CD4-positive, alpha-beta T cell (primary cell): ENCODE measurements at regions of chr2 and their contacts with region 1.

Region 1: GRCh38 chr2:196783431-196784094 is 15.9 kb downstream of the GTF3C3 start:
- DNase-seq: no peak
- ATAC-seq: no peak
- H3K4me3 ChIP-seq: no peak overlapping the region
- H3K4me3 Mint-ChIP-seq: no peak overlapping the region
- H3K27ac ChIP-seq: no peak overlapping the region
- H3K27ac Mint-ChIP-seq: no peak overlapping the region
- H3K4me1 ChIP-seq: no peaks in the 10 kb centered on the region
- H3K4me1 Mint-ChIP-seq: peaks cover 7% of the 10 kb centered on the region
- H3K27me3 ChIP-seq: no peaks in the 10 kb centered on the region
- H3K27me3 Mint-ChIP-seq: no peaks in the 10 kb centered on the region
- CTCF ChIP-seq: no peak

Region 2: GRCh38 chr2:196971574-196972279 is 188.2 kb after region 1 on chr2:
- CTCF ChIA-PET with region 1: no interaction called
- POLR2A ChIA-PET with region 1: no interaction called
- intact Hi-C with region 1: no loop called
- DNase-seq: no peak
- ATAC-seq: no peak
- H3K4me3 ChIP-seq: no peak overlapping the region
- H3K4me3 Mint-ChIP-seq: no peak overlapping the region
- H3K27ac ChIP-seq: no peak overlapping the region
- H3K27ac Mint-ChIP-seq: no peak overlapping the region
- H3K4me1 ChIP-seq: no peaks in the 10 kb centered on the region
- H3K4me1 Mint-ChIP-seq: no peaks in the 10 kb centered on the region
- H3K27me3 ChIP-seq: no peaks in the 10 kb centered on the region
- H3K27me3 Mint-ChIP-seq: no peaks in the 10 kb centered on the region
- CTCF ChIP-seq: no peak

Region 3: DNA sequence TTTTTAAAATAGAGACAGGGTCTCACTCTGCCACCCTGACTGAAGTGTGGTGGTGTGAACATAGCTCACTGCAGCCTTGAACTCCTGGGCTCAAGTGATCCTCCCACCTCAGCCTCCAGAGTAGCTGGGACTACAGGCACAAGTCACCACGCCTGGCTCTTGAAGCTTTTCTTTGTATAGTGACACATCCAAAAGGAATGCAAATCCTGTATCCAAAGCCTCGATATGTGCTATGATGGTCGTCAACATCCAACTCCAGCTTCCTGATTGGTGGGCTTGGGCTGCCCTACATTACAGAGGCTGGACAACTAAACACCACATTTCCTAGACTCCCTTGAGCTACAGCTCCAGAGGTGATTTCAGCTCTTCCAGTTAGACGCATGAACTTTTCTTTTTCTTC is 244.7 kb after region 1 on chr2:
- CTCF ChIA-PET with region 1: no interaction called
- POLR2A ChIA-PET with region 1: no interaction called
- intact Hi-C with region 1: no loop called
- DNase-seq: no peak
- ATAC-seq: no peak
- H3K4me3 ChIP-seq: no peak overlapping the region
- H3K4me3 Mint-ChIP-seq: no peak overlapping the region
- H3K27ac ChIP-seq: no peak overlapping the region
- H3K27ac Mint-ChIP-seq: peak overlapping the region; percentile 74
- H3K4me1 ChIP-seq: peaks cover 9% of the 10 kb centered on the region
- H3K4me1 Mint-ChIP-seq: peaks cover 18% of the 10 kb centered on the region
- H3K27me3 ChIP-seq: no peaks in the 10 kb centered on the region
- H3K27me3 Mint-ChIP-seq: no peaks in the 10 kb centered on the region
- CTCF ChIP-seq: no peak

Region 4: DNA sequence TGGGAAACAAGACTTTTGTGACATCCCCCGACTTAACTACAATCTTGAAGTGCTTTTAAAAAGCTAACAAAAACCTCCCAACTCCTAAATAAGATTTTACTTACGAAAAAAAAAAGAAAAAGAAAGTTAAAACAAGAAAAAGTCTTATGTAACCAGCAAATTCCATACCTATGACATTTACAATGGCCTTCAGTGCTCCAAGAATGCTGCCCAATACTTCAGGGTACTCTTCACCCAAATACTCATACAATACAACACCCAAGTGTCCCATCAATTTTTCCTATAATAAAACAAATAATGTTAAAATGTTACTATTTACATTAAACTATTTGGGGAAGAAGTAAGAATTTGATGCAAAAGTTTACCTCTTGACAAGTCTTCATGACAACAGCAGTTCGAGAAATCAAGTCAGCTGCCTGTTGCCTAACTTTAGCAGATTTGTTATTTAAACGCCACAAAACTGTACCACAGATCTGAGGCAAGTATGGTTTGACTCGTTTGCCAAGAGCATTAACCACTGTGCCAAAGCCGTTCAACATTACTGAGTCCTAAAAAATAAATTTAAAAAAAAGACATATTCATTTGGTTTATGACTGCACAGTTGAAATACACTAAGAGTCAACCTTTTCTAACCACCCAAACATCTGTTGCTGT is 616.5 kb after region 1 on chr2:
- CTCF ChIA-PET with region 1: no interaction called
- POLR2A ChIA-PET with region 1: no interaction called
- intact Hi-C with region 1: loop called in 1 of 2 experiments (anchors 10 kb)
- DNase-seq: no peak
- ATAC-seq: no peak
- H3K4me3 ChIP-seq: no peak overlapping the region
- H3K4me3 Mint-ChIP-seq: no peak overlapping the region
- H3K27ac ChIP-seq: no peak overlapping the region
- H3K27ac Mint-ChIP-seq: no peak overlapping the region
- H3K4me1 ChIP-seq: no peaks in the 10 kb centered on the region
- H3K4me1 Mint-ChIP-seq: no peaks in the 10 kb centered on the region
- H3K27me3 ChIP-seq: no peaks in the 10 kb centered on the region
- H3K27me3 Mint-ChIP-seq: no peaks in the 10 kb centered on the region
- CTCF ChIP-seq: no peak

Region 5: DNA sequence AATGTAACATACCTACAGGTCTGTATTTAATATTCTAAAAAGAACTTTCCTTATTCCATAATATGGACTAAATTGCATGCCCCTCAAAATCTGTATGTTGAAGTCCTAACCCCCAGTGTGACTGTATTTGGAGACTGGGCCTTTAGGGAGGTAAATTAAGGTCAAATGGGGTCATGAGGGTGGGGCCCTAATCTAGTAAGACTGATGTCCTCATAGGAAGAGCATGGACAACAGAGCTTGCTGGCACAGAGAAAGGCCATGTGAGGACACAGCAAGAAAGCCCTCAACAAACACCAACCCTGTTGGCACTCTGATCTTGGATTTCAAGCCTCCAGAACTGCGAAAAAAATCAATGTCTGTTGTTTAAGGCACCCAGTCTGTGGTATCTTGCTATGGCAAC is 632.7 kb after region 1 on chr2:
- CTCF ChIA-PET with region 1: no interaction called
- POLR2A ChIA-PET with region 1: no interaction called
- intact Hi-C with region 1: loop called in 1 of 2 experiments (anchors 10 kb)
- DNase-seq: no peak
- ATAC-seq: no peak
- H3K4me3 ChIP-seq: no peak overlapping the region
- H3K4me3 Mint-ChIP-seq: no peak overlapping the region
- H3K27ac ChIP-seq: no peak overlapping the region
- H3K27ac Mint-ChIP-seq: no peak overlapping the region
- H3K4me1 ChIP-seq: no peaks in the 10 kb centered on the region
- H3K4me1 Mint-ChIP-seq: peaks cover 17% of the 10 kb centered on the region
- H3K27me3 ChIP-seq: no peaks in the 10 kb centered on the region
- H3K27me3 Mint-ChIP-seq: no peaks in the 10 kb centered on the region
- CTCF ChIP-seq: no peak